MCF 10A (cell line): ENCODE measurements at regions of chr17 and their contacts with region 1.

Region 1: GRCh38 chr17:732067-732901 is at the start of gene TLCD3A:
- DNase-seq: peak; percentile 60
- H3K4me3 Mint-ChIP-seq: peak within 1 kb of the TSS; percentile 87
- H3K27ac Mint-ChIP-seq: peak within 1 kb of the TSS; percentile 61
- H3K4me1 Mint-ChIP-seq: peaks cover 31% of the 10 kb centered on the region
- H3K27me3 Mint-ChIP-seq: no peaks in the 10 kb centered on the region
- CTCF ChIP-seq: no peak
- total RNA-seq, gene TLCD3A: 28.4 and 31.6 TPM in 2 replicates

Region 2: GRCh38 chr17:716238-716637 is 16.0 kb before region 1 on chr17:
- CTCF ChIA-PET with region 1: interaction called, 4 read pairs
- POLR2A ChIA-PET with region 1: interaction called, 167 read pairs
- intact Hi-C with region 1: loop called (anchors 2 kb)
- DNase-seq: no peak
- H3K4me3 Mint-ChIP-seq: no peak overlapping the region
- H3K27ac Mint-ChIP-seq: no peak overlapping the region
- H3K4me1 Mint-ChIP-seq: peaks cover 14% of the 10 kb centered on the region
- H3K27me3 Mint-ChIP-seq: no peaks in the 10 kb centered on the region
- CTCF ChIP-seq: no peak

Region 3: DNA sequence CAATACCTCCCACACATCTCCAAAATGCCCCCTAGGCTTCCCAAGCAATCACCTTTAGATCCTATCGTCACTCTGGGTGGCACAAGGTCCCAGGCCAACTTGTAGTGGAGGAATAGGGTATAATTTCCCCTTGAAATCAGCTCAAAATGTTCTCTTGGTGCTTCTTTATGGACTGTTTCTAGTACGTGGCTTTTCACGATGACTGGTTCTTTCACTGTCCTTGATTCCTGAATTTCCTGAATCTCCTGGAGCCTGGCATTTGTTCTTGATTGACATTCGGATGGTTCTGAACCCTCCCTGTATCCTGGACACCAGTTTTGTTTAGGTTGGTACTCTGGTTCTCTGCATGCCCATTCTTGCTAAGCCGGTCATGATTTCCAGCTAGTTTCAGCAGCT is 10.7 kb before region 1 on chr17:
- CTCF ChIA-PET with region 1: interaction called, 4 read pairs
- POLR2A ChIA-PET with region 1: interaction called, 167 read pairs
- intact Hi-C with region 1: no loop called
- DNase-seq: no peak
- H3K4me3 Mint-ChIP-seq: no peak overlapping the region
- H3K27ac Mint-ChIP-seq: peak overlapping the region; percentile 50
- H3K4me1 Mint-ChIP-seq: peaks cover 25% of the 10 kb centered on the region
- H3K27me3 Mint-ChIP-seq: no peaks in the 10 kb centered on the region
- CTCF ChIP-seq: no peak

Region 4: DNA sequence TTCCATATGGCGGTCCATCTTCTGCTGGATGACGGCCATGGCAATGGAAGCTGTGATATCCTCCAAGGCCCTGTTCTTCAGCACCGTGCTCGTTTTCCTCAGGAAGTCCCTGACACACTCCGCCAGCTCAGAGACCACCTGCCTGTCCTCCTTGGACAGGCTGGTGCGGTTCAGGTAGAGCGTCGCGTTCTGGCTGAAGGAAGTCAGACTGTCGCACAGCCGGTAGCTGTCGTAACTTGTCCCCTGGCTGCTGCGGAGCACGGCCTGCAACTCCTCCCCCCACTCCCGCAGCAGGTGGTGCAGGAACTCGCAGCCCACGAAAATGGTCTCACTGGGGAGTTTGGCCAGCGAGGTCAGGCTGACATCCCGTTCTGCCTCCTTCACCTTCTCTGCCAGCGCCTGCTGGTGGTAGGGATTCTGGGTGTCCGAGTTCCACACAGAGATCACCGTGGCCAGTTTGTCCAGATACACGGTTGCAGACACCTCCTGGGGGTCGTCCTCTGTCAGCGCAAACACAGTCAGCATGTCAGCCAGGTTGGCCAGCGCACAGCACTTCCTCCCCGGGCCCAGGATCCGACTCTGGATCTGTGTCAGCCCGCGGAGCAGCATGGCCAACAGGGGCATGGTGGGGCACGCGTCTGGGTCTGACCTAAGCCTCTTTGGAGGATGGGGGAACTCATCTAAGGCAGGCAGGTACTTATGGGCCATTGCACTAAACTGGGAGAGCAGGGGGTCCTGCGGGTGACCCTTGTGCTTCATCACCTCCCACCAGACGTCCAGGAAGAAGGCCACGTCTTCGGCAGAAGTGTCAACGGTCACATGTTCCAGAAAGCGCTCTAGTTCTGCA is 14.7 kb after region 1 on chr17:
- CTCF ChIA-PET with region 1: interaction called, 5 read pairs
- POLR2A ChIA-PET with region 1: interaction called, 44 read pairs
- intact Hi-C with region 1: no loop called
- DNase-seq: no peak
- H3K4me3 Mint-ChIP-seq: no peak overlapping the region
- H3K27ac Mint-ChIP-seq: no peak overlapping the region
- H3K4me1 Mint-ChIP-seq: peaks cover 18% of the 10 kb centered on the region
- H3K27me3 Mint-ChIP-seq: no peaks in the 10 kb centered on the region
- CTCF ChIP-seq: no peak

Region 5: GRCh38 chr17:752002-752619 is 19.8 kb after region 1 on chr17 and contains the start of gene GEMIN4:
- CTCF ChIA-PET with region 1: interaction called, 6 read pairs
- POLR2A ChIA-PET with region 1: interaction called, 44 read pairs
- intact Hi-C with region 1: no loop called
- DNase-seq: peak; percentile 88
- H3K4me3 Mint-ChIP-seq: peak within 1 kb of the TSS; percentile 98
- H3K27ac Mint-ChIP-seq: peak within 1 kb of the TSS; percentile 93
- H3K4me1 Mint-ChIP-seq: peaks cover 18% of the 10 kb centered on the region
- H3K27me3 Mint-ChIP-seq: no peaks in the 10 kb centered on the region
- CTCF ChIP-seq: peak; percentile 97
- total RNA-seq, gene GEMIN4: 19.5 and 24.1 TPM in 2 replicates